Activated CD8-positive, alpha-beta T cell treated with anti-CD3 and anti-CD28 coated beads for 36 hours (primary cell): ENCODE measurements at regions of chr4 and their contacts with region 1.

Region 1: DNA sequence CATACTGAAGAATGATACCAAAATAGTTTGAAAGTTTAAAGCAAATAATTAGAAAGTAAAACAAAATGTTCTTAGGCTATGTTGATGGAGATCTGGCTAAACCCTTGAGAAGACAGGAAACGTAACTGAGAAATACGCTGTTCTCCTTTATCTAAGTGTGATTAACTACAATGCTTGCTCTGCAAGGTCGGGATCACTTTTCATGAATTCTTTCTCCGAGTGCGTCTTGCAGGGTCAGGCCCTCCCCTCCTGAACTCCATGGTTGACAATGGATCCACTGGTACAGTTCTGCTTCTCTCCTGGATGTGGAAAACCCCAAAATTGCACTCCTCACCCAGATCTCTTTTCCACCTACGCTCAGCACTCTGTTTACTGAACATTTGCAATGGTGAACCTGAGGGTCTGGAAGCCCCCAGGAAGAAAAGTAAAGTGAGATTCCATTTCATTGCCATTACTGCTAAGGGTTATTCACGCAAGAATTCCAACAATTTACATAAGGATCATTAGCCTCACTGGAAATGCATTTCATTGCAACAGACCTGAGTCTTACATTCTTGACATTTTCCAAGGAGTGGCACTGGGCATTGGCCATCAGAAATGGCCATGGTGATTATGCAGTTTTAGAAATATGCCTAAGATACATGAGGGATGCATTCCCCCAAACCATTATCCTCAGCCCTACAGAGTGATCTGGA is 24.6 kb upstream of the WWC2 start:
- DNase-seq: no peak
- ATAC-seq: no peak
- H3K4me3 Mint-ChIP-seq: no peak overlapping the region
- H3K27ac Mint-ChIP-seq: no peak overlapping the region
- H3K4me1 Mint-ChIP-seq: no peaks in the 10 kb centered on the region
- H3K27me3 Mint-ChIP-seq: peaks cover 9% of the 10 kb centered on the region
- CTCF ChIP-seq: no peak

Region 2: GRCh38 chr4:182901337-182901736 is 173.1 kb before region 1 on chr4:
- CTCF ChIA-PET with region 1: no interaction called
- POLR2A ChIA-PET with region 1: no interaction called
- intact Hi-C with region 1: no loop called
- DNase-seq: no peak
- ATAC-seq: no peak
- H3K4me3 Mint-ChIP-seq: no peak overlapping the region
- H3K27ac Mint-ChIP-seq: no peak overlapping the region
- H3K4me1 Mint-ChIP-seq: peaks cover 8% of the 10 kb centered on the region
- H3K27me3 Mint-ChIP-seq: no peaks in the 10 kb centered on the region
- CTCF ChIP-seq: no peak

Region 3: GRCh38 chr4:182955411-182955810 is 119.0 kb before region 1 on chr4:
- CTCF ChIA-PET with region 1: no interaction called
- POLR2A ChIA-PET with region 1: no interaction called
- intact Hi-C with region 1: no loop called
- DNase-seq: no peak
- ATAC-seq: no peak
- H3K4me3 Mint-ChIP-seq: no peak overlapping the region
- H3K27ac Mint-ChIP-seq: no peak overlapping the region
- H3K4me1 Mint-ChIP-seq: no peaks in the 10 kb centered on the region
- H3K27me3 Mint-ChIP-seq: peaks cover 2% of the 10 kb centered on the region
- CTCF ChIP-seq: no peak

Region 4: GRCh38 chr4:183098019-183098722 is 23.7 kb after region 1 on chr4:
- CTCF ChIA-PET with region 1: interaction called, 10 read pairs
- POLR2A ChIA-PET with region 1: no interaction called
- intact Hi-C with region 1: no loop called
- DNase-seq: peak; percentile 13
- ATAC-seq: peak; percentile 41
- H3K4me3 Mint-ChIP-seq: peak overlapping the region; percentile 36
- H3K27ac Mint-ChIP-seq: no peak overlapping the region
- H3K4me1 Mint-ChIP-seq: peaks cover 6% of the 10 kb centered on the region
- H3K27me3 Mint-ChIP-seq: peaks cover 47% of the 10 kb centered on the region
- CTCF ChIP-seq: no peak

Region 5: DNA sequence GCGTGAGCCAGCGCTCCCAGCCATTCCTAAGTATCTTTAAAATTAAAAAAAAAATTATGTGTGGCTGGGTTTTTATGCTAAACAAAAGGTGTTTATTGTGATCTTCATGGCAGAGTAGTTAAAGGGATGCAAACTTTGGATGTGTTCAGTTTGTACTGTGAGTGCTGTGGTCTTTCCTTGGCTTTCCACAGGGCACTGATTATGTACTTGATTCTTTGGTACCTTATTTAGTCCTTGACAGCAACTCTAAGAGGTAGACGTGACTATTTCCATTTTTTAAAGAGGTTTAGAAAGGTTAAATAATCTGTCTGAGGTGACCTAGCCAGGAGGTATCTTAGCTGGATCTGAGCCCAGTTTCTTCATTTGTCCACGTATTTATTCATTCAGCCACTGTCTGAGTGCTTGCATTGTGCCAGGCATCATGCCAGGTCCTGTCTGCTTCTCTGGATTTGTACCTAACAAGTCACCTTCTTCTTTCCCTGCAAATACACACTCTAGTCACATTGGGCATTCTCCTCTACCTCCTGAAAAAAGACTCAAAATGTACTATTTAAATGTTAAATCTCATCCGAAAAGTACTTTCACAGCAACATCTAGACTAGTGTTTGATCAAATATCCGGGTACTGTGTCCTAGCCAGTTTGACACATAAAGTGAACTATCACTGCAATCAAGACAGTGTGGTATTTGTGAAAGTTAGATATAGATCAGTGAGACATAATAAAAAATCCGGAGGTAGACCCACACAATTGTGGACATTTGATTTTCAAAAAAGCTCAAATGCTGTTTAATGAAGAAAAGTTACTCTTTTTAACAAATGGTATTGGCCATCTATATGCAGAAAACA is 56.1 kb after region 1 on chr4:
- CTCF ChIA-PET with region 1: no interaction called
- POLR2A ChIA-PET with region 1: no interaction called
- intact Hi-C with region 1: no loop called
- DNase-seq: no peak
- ATAC-seq: no peak
- H3K4me3 Mint-ChIP-seq: no peak overlapping the region
- H3K27ac Mint-ChIP-seq: no peak overlapping the region
- H3K4me1 Mint-ChIP-seq: no peaks in the 10 kb centered on the region
- H3K27me3 Mint-ChIP-seq: peaks cover 7% of the 10 kb centered on the region
- CTCF ChIP-seq: no peak

Region 6: GRCh38 chr4:183241721-183242151 is 167.3 kb after region 1 on chr4:
- CTCF ChIA-PET with region 1: interaction called, 12 read pairs
- POLR2A ChIA-PET with region 1: no interaction called
- intact Hi-C with region 1: no loop called
- DNase-seq: no peak
- ATAC-seq: no peak
- H3K4me3 Mint-ChIP-seq: no peak overlapping the region
- H3K27ac Mint-ChIP-seq: no peak overlapping the region
- H3K4me1 Mint-ChIP-seq: no peaks in the 10 kb centered on the region
- H3K27me3 Mint-ChIP-seq: peaks cover 10% of the 10 kb centered on the region
- CTCF ChIP-seq: no peak

Region 7: GRCh38 chr4:183249857-183250256 is 175.4 kb after region 1 on chr4:
- CTCF ChIA-PET with region 1: interaction called, 75 read pairs
- POLR2A ChIA-PET with region 1: no interaction called
- intact Hi-C with region 1: no loop called
- DNase-seq: peak; percentile 44
- ATAC-seq: no peak
- H3K4me3 Mint-ChIP-seq: no peak overlapping the region
- H3K27ac Mint-ChIP-seq: no peak overlapping the region
- H3K4me1 Mint-ChIP-seq: no peaks in the 10 kb centered on the region
- H3K27me3 Mint-ChIP-seq: no peaks in the 10 kb centered on the region
- CTCF ChIP-seq: no peak

Region 8: DNA sequence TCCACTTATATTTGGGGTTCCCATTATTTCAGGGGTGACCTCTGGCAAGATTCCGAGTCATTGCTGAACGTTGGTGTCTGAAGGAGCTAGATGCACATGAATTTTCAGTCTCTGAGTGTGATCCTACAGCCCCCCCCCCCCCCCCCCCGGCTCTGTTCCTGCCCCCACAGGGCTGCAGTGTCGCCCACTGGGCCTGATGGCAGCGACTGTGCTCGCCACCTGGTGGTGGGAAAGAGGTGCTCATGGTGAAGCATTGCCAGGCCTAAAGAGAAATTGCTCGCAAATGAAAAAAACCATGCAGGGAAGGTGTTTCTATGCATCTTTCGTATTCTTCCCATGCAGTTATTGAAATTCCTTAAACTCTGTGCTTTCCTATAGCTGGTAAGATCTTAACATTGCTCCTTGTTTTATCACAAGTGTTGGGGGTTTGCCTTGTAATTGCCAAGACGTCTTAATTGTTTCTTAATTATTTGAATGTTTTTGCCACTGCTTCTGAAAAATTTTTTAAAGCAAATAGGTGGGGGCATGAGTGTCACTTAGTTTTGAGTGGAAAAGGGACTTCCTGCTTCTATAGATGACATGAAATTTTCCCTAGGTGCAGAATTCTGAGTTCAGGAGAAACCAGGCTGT is 182.4 kb after region 1 on chr4:
- CTCF ChIA-PET with region 1: interaction called, 84 read pairs
- POLR2A ChIA-PET with region 1: no interaction called
- intact Hi-C with region 1: loop called (anchors 1 kb)
- DNase-seq: peak; percentile 64
- ATAC-seq: peak; percentile 60
- H3K4me3 Mint-ChIP-seq: no peak overlapping the region
- H3K27ac Mint-ChIP-seq: no peak overlapping the region
- H3K4me1 Mint-ChIP-seq: no peaks in the 10 kb centered on the region
- H3K27me3 Mint-ChIP-seq: no peaks in the 10 kb centered on the region
- CTCF ChIP-seq: peak; percentile 68

Region 9: GRCh38 chr4:183618681-183619080 is 544.2 kb after region 1 on chr4:
- CTCF ChIA-PET with region 1: no interaction called
- POLR2A ChIA-PET with region 1: no interaction called
- intact Hi-C with region 1: no loop called
- DNase-seq: no peak
- ATAC-seq: no peak
- H3K4me3 Mint-ChIP-seq: no peak overlapping the region
- H3K27ac Mint-ChIP-seq: no peak overlapping the region
- H3K4me1 Mint-ChIP-seq: no peaks in the 10 kb centered on the region
- H3K27me3 Mint-ChIP-seq: peaks cover 2% of the 10 kb centered on the region
- CTCF ChIP-seq: no peak